Activated CD4-positive, alpha-beta T cell treated with anti-CD3 and anti-CD28 coated beads for 36 hours (primary cell): ENCODE measurements at regions of chr7 and their contacts with region 1.

Region 1: DNA sequence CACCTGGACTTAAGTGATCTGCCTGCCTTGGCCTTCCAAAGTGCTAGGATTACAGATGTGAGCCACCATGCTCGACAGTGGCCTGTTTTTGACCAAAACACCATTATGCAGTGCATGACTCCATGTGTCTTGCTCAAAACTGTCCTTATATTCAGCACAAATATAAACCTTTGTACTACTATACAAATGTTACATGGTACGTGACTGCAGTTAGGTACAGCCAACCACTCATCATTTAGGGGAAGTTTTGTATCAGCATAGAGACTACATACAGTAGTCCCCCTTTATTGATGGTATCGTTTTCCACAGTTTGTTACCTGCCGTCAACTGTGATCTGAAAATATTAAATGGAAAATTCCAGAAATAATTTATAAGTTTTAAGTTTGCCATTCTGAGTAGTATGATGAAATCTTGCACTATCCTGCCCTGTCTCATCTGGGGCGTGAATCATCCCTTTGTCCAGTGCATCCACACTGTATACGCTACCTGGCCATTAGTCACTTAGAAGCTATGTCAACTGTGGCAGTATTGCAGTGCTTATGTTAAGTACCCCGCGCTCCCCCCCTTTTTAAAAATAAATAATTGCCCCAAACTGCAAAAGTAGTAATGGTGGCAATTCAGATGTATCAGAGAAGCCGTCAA is 23.3 kb upstream of the ZNF282 start:
- DNase-seq: no peak
- ATAC-seq: no peak
- H3K4me3 Mint-ChIP-seq: no peak overlapping the region
- H3K27ac Mint-ChIP-seq: peak overlapping the region; percentile 48
- H3K4me1 Mint-ChIP-seq: no peaks in the 10 kb centered on the region
- H3K27me3 Mint-ChIP-seq: no peaks in the 10 kb centered on the region

Region 2: DNA sequence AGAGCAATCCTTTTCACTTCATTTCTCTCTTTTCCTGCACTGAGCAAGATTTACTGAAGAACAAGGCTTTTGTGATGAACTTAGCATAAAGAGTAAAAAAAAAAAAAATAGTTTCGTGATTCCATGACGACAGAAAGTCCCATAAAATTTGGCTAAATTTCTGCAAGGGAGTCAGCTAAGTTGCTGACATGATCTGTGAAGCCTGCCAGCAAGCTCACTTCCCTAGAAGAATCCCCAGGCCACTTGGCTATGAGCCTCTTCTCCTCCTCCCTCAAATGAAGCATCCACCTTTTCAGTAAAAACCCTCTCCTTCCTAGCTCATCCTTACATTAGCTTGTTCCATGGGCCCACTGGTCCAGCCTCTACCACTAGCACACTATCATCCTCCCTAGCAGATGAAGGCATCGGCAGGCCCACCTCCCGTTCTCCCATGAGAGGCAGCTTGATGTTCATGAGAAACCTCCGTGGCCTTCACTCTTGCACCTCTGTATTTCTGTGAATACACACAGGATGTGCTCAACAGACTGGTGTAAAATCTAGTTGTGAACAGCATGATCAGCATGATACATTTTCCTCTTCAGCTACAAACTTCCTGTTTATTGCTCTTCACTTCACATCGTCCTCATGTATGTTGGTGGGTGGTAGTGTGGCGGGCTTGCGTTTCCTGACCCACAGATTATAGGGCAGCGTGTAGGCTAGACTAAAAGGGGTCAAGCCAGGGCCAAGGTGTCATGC is 1309.3 kb after region 1 on chr7:
- CTCF ChIA-PET with region 1: no interaction called
- POLR2A ChIA-PET with region 1: interaction called, 10 read pairs
- intact Hi-C with region 1: no loop called
- DNase-seq: peak; percentile 56
- ATAC-seq: peak; percentile 70
- H3K4me3 Mint-ChIP-seq: peak overlapping the region; percentile 67
- H3K27ac Mint-ChIP-seq: peak overlapping the region; percentile 100
- H3K4me1 Mint-ChIP-seq: peaks cover 97% of the 10 kb centered on the region
- H3K27me3 Mint-ChIP-seq: no peaks in the 10 kb centered on the region

Region 3: GRCh38 chr7:150568714-150569113 is 1396.7 kb after region 1 on chr7:
- CTCF ChIA-PET with region 1: no interaction called
- POLR2A ChIA-PET with region 1: no interaction called
- intact Hi-C with region 1: no loop called
- DNase-seq: peak; percentile 51
- ATAC-seq: peak; percentile 43
- H3K4me3 Mint-ChIP-seq: peak overlapping the region; percentile 89
- H3K27ac Mint-ChIP-seq: peak overlapping the region; percentile 99
- H3K4me1 Mint-ChIP-seq: peaks cover 57% of the 10 kb centered on the region
- H3K27me3 Mint-ChIP-seq: no peaks in the 10 kb centered on the region